Left colon (tissue), 2 donors: ENCODE measurements at regions of chr1 and their contacts with region 1.

Region 1: GRCh38 chr1:167687919-167688519 is 33.8 kb upstream of the MPZL1 start:
- DNase-seq: peak; percentile 56 to 82
- ATAC-seq: peak; percentile 74

Region 2: GRCh38 chr1:167599957-167600581 is 88.0 kb before region 1 on chr1:
- intact Hi-C with region 1: loop called (anchors 5 to 10 kb)
- DNase-seq: no peak
- ATAC-seq: peak; percentile 88

Region 3: GRCh38 chr1:167881069-167881468 is 193.1 kb after region 1 on chr1:
- intact Hi-C with region 1: no loop called
- DNase-seq: no peak
- ATAC-seq: no peak